Gastrocnemius medialis (tissue), 4 donors: ENCODE measurements at regions of chr2 and their contacts with region 1.

Region 1: GRCh38 chr2:168118733-168119514 is 128.5 kb downstream of the STK39 start:
- DNase-seq: no peak
- ATAC-seq: peak; percentile 80 to 85
- H3K4me3 ChIP-seq: no peak overlapping the region
- H3K27ac ChIP-seq: peak overlapping the region in 3 of 4 donors; percentile 19 to 53 (median 40)
- H3K4me1 ChIP-seq: peaks cover 10 to 12% of the 10 kb centered on the region in 2 donors
- H3K27me3 ChIP-seq: no peaks in the 10 kb centered on the region
- CTCF ChIP-seq: peak; percentile 50 to 73 (median 67)
- POLR2A ChIP-seq: no peak

Region 2: DNA sequence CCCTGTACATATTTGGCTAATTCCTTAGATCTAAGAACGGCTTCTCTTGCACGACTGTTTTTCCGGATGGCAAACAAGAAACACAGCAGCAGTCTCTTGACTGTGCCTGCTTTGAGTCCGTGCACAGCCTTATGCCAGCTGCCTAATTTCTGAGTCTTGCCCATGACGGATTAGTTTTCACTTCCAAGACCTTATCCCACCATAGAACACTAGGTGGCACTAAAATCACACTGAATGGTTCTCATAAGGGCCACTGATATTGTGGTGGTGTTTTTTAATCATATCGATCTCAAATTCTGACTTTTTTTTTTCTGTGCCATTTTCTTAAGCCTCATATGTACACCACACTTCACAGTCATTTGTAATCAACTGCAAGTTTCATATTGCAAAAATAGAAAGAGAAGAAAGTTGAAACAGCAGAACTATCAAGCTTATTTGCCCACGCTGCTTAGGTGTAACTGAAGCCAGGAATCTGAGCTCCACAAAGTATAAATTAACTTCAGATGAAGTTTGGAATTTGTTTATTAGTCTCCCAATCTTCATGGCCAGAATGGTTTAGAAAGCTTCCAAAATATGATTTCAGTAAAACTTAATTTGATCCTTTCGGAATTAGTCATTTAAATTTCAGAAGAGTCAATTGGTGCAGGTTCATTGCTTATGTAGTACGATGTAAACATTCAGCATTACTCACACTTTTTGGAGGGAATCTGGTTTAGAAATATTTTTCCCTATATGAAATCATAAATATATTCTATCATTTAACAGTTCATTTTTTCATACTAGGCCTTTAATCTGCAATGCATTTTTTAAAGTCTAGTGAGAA is 1579.4 kb before region 1 on chr2:
- in situ Hi-C with region 1: loop called (anchors 10 to 25 kb)
- intact Hi-C with region 1: loop called (anchors 5 kb)
- DNase-seq: no peak
- ATAC-seq: peak; percentile 72 to 94
- H3K4me3 ChIP-seq: peak overlapping the region in 1 of 4 donors; percentile 28
- H3K27ac ChIP-seq: no peak overlapping the region
- H3K4me1 ChIP-seq: no peaks in the 10 kb centered on the region
- H3K27me3 ChIP-seq: no peaks in the 10 kb centered on the region
- CTCF ChIP-seq: peak; percentile 32 to 75 (median 65)
- POLR2A ChIP-seq: no peak

Region 3: GRCh38 chr2:167134381-167135072 is 984.4 kb before region 1 on chr2:
- in situ Hi-C with region 1: no loop called
- intact Hi-C with region 1: loop called (anchors 5 kb)
- DNase-seq: no peak
- ATAC-seq: no peak
- H3K4me3 ChIP-seq: no peak overlapping the region
- H3K27ac ChIP-seq: peak overlapping the region in 1 of 4 donors; percentile 71
- H3K4me1 ChIP-seq: peaks cover 4 to 20% of the 10 kb centered on the region in 2 donors
- H3K27me3 ChIP-seq: no peaks in the 10 kb centered on the region
- CTCF ChIP-seq: no peak
- POLR2A ChIP-seq: no peak

Region 4: DNA sequence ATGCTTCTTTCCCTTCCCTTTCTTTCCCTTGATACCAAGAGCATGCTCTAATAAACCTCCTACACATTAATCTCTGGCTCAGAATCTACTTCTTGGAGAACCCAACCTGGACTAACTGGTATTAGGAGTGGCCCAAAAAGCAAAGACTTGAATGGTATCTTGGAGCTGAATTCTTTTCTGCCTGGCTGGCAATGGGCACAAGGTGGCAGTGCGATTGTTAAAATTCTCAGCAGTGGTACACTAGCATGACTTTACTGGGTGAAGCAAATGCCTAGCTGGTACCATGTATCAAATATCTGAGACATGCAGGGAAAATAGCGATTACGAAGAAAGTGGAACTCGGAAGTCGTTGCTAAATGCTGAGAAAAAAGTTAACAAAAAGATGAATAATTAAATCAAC is 854.5 kb before region 1 on chr2:
- in situ Hi-C with region 1: loop called in 3 of 4 experiments (anchors 10 to 25 kb)
- intact Hi-C with region 1: loop called (anchors 1 kb)
- DNase-seq: peak in 1 of 2 donors; percentile 25
- ATAC-seq: peak; percentile 58 to 76
- H3K4me3 ChIP-seq: no peak overlapping the region
- H3K27ac ChIP-seq: peak overlapping the region; percentile 29 to 62 (median 48)
- H3K4me1 ChIP-seq: peaks cover 0 to 10% of the 10 kb centered on the region in 2 donors
- H3K27me3 ChIP-seq: no peaks in the 10 kb centered on the region
- CTCF ChIP-seq: peak in 4 of 5 experiments; percentile 21 to 46 (median 40)
- POLR2A ChIP-seq: no peak

Region 5: DNA sequence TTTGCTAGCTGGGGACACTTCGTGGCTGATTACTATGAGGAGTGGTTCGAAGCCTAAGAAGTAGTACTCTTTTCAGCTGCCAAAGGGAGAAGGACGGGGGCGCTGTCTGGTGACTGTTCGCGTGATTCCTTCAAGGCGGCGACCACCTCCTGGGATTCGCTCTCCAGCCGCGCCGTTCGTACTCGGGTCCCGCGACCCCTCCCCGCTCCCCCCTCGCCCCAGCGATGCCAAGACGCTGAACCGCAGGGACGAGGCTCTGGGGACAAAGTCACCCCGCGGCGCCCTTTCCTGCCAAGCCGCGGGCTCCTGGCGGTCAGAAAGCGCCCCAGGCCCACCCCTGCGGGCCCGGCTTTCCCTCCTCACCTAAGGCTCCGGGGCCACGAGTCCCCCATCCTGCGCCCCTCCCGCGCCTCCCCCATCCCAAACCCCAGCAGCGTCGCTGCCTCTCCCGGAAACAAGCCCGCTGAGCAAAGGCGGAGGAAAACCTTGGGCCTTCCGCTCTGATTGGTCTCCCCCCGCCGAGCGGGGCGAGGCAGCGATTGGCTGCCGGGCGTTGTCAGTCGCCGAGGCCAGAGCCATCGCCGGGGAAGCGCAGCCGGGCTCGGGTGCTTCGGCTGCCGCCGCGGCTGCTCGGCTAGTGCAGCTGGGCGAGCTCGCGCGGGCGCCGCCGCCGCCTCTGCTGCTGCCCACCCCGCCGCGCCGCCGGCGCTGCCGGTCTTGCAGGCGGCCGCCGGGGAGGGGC is 826.3 kb before region 1 on chr2:
- in situ Hi-C with region 1: loop called in 1 of 4 experiments (anchors 10 kb)
- intact Hi-C with region 1: loop called (anchors 10 kb)
- DNase-seq: peak; percentile 69 to 83
- ATAC-seq: peak; percentile 93 to 94
- H3K4me3 ChIP-seq: peak within 1 kb of the TSS; percentile 78 to 96 (median 85)
- H3K27ac ChIP-seq: peak within 1 kb of the TSS; percentile 83 to 85 (median 84)
- H3K4me1 ChIP-seq: peaks cover 10 to 21% of the 10 kb centered on the region in 2 donors
- H3K27me3 ChIP-seq: peaks cover 40 to 43% (median 42%) of the 10 kb centered on the region in 3 donors
- CTCF ChIP-seq: peak in 2 of 5 experiments; percentile 40 to 49
- POLR2A ChIP-seq: peak; percentile 39 to 47

Region 6: DNA sequence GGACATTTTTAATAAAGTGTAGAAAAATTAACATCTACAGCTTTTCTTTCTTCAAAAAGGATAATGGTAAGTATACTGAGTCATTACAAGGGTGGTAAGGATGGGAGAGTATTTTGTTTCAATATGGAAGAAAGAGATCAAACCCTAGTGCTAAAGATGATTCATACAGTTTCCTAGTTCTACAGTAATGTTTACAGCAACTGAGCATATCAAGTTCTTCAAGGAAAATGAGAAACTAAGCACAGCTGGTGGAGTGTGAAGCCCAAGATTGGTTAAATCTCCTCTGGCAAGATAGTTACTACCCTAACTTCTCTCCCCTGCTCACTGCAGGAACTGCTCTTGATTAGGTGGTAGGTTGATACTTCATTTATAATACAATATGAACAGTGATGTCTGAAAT is 763.1 kb before region 1 on chr2:
- in situ Hi-C with region 1: no loop called
- intact Hi-C with region 1: no loop called
- DNase-seq: no peak
- ATAC-seq: no peak
- H3K4me3 ChIP-seq: no peak overlapping the region
- H3K27ac ChIP-seq: no peak overlapping the region
- H3K4me1 ChIP-seq: no peaks in the 10 kb centered on the region
- H3K27me3 ChIP-seq: no peaks in the 10 kb centered on the region
- CTCF ChIP-seq: no peak
- POLR2A ChIP-seq: no peak

Region 7: GRCh38 chr2:167689444-167689843 is 429.5 kb before region 1 on chr2:
- in situ Hi-C with region 1: loop called in 1 of 4 experiments (anchors 5 kb)
- intact Hi-C with region 1: no loop called
- DNase-seq: peak; percentile 57 to 60
- ATAC-seq: peak; percentile 94 to 97
- H3K4me3 ChIP-seq: peak overlapping the region in 1 of 4 donors; percentile 17
- H3K27ac ChIP-seq: peak overlapping the region; percentile 24 to 75 (median 36)
- H3K4me1 ChIP-seq: no peaks in the 10 kb centered on the region
- H3K27me3 ChIP-seq: no peaks in the 10 kb centered on the region
- CTCF ChIP-seq: peak in 4 of 5 experiments; percentile 6 to 32 (median 24)
- POLR2A ChIP-seq: no peak